Head of caudate nucleus (tissue), 42 donors: ENCODE measurements at regions of chr2 and their contacts with region 1.

Region 1: DNA sequence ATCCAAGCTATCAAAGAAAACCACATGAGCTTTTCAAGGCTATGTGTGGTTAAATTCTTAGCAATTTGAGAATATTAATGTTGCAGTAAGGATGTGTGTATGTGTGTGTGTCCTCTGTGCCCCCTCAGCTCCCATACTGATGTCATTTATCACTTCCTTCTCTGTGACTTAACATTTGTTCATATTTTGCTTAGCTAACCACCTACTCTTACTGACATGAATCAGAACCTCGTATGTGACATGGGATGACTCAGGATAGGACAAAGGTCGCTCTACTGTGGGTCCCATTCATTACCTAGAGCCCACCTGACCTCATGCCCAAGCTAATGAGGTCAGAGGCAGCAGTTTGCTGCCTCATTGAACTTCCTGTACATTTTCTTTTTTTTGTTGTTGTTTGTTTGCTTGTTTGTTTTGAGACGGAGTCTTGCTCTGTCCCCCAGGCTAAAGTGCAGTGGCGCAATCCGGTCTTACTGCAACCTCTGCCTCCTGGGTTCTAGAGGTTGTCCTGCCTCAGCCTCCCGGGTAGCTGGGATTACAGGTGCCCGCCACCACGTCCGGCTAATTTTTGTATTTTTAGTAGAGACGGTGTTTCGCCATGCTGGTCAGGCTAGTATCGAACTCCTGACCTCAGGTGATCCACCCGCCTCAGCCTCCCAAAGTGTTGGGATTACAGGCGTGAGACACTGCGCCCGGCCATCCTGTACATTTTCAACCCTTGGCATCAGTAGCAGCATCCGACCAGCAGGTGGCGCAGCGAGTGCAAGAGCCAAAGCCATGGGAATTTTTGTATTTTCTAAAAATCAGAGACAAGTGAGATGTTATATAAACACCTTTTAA is 36.4 kb downstream of the MOGAT1 start:
- DNase-seq: peak; percentile 61 to 96 (median 89)

Region 2: DNA sequence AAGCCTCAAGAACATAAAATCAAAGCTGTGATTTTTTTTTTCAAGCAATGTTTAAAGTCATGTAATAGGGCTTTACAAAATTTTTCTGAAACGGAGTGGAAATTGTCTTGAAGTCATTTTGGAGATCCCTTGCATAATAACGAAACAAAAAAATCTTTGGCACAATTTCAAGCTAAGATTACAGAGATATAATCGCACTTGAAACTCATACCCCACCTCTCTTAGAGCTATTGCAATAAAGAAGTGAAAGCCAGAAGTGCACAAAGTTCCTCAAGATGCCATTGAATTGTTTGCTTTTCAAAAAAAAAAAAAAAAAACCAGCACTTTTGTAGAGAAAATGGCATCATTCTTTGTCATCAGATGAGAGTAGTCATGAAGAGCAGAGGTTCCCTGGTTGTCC is 561.4 kb before region 1 on chr2:
- intact Hi-C with region 1: no loop called
- DNase-seq: no peak

Region 3: GRCh38 chr2:222797261-222797660 is 89.4 kb after region 1 on chr2:
- intact Hi-C with region 1: loop called (anchors 5 kb)
- DNase-seq: no peak

Region 4: DNA sequence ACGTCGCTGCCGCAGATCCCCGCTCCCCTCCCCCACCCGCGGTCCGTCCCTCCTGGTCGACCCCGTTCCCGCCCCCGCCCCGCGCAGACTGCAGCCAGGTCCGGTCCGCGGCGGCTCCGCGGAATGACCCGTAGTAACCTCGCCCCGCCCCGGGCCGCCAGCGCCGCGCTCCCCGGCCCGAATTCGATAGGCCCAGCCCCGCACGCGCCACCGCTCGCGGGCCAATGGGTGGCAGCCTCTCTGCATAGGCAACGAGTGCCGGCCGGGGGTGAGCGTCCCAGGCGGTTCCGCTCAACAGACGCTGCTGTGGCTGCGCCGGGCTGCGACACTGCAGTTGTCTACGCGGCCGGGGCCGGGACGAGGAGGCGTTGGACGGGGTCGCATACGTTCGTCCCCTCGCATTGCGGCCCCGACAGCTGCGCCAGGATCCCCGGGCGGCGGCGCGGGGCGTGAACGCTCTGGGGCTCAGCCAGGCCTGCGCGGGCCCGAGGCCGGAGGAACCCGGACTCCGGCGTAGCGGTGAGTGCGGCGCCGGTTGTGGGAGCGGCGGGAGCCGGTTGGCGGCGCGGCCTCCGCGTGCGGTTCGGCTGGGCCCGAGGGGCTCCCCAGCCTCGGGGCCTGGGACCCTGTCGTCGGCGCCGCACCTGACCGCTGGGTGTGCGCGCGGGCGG is 153.0 kb after region 1 on chr2 and contains the start of gene ACSL3:
- intact Hi-C with region 1: loop called (anchors 2 kb)
- DNase-seq: peak; percentile 96 to 99 (median 98)

Region 5: GRCh38 chr2:222903234-222904220 is 195.6 kb after region 1 on chr2:
- intact Hi-C with region 1: loop called (anchors 10 kb)
- DNase-seq: peak in 18 of 42 donors; percentile 33 to 73 (median 43)